ENCODE measurements at regions of chr15 and their contacts with region 1.

Region 1: DNA sequence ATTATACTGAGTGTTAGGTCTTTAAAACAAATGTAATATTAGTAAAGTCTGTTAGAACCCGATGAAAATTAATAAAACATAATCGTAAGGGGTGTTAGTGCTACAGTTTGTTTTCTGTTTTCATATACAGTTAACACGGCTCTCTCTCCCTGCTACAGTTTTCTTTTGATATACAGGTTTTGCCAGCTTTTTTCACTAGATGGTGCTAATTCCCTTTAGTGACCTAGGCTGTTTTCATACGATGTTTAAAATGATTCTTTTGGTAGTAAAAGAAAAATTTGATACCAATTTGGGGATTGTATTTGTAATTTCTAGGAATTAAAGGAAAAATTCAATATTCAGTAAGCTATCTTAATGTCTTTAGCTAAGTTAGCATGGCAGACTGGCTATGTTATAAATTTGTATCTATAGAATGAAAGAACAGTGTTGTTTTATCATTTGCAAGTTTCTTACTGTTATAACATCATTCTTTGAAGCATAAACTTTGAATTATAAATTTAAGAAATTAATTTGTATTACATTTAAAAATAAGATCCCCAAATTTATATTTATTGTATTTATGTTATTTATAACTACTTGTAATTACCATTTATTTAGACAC is 11.5 kb downstream of the APH1B start:
- DNase-seq: no peak
- H3K4me3 ChIP-seq: no peak overlapping the region
- H3K27ac ChIP-seq: no peak overlapping the region
- H3K4me1 ChIP-seq: no peaks in the 10 kb centered on the region
- H3K27me3 ChIP-seq: no peaks in the 10 kb centered on the region
- CTCF ChIP-seq: peak in 2 of 3 donors; percentile 54 to 58
- EP300 ChIP-seq: no peak
- POLR2A ChIP-seq: no peak

Region 2: DNA sequence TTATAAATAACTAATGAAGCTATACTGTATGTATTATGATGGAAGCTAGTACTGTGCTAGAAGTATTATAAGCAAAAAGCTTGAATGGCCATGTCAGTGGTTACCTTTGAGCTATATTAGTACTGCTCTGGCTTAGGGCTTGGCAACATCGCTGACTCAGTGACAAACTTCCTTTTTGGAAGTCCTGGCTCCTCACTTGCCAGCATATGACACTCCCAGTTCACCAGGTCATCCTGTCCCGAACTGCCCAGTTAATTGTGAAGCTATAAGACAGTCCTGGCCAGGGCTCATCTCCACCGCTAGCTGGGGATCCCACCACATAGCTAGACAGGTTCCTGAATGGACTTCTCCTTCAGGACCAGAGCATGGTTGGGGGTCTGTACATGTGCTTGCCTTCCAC is 67.5 kb before region 1 on chr15:
- intact Hi-C with region 1: no loop called
- DNase-seq: peak in 1 of 5 donors; percentile 29
- H3K4me3 ChIP-seq: no peak overlapping the region
- H3K27ac ChIP-seq: no peak overlapping the region
- H3K4me1 ChIP-seq: peaks cover 4% of the 10 kb centered on the region
- H3K27me3 ChIP-seq: no peaks in the 10 kb centered on the region
- CTCF ChIP-seq: no peak
- EP300 ChIP-seq: no peak
- POLR2A ChIP-seq: no peak

Region 3: GRCh38 chr15:63381301-63382204 is 92.7 kb after region 1 on chr15 and contains the start of gene CA12:
- intact Hi-C with region 1: loop called in 1 of 4 experiments (anchors 10 kb)
- DNase-seq: peak in 2 of 5 donors; percentile 30 to 46
- H3K4me3 ChIP-seq: peak within 1 kb of the TSS; percentile 40
- H3K27ac ChIP-seq: no peak within 1 kb of the TSS
- H3K4me1 ChIP-seq: peaks cover 2% of the 10 kb centered on the region
- H3K27me3 ChIP-seq: no peaks in the 10 kb centered on the region
- CTCF ChIP-seq: no peak
- EP300 ChIP-seq: no peak
- POLR2A ChIP-seq: no peak
- total RNA-seq, gene CA12: 0.61 to 10.5 (median 3.5) TPM in 6 of 7 donors, not detected in the other

Region 4: DNA sequence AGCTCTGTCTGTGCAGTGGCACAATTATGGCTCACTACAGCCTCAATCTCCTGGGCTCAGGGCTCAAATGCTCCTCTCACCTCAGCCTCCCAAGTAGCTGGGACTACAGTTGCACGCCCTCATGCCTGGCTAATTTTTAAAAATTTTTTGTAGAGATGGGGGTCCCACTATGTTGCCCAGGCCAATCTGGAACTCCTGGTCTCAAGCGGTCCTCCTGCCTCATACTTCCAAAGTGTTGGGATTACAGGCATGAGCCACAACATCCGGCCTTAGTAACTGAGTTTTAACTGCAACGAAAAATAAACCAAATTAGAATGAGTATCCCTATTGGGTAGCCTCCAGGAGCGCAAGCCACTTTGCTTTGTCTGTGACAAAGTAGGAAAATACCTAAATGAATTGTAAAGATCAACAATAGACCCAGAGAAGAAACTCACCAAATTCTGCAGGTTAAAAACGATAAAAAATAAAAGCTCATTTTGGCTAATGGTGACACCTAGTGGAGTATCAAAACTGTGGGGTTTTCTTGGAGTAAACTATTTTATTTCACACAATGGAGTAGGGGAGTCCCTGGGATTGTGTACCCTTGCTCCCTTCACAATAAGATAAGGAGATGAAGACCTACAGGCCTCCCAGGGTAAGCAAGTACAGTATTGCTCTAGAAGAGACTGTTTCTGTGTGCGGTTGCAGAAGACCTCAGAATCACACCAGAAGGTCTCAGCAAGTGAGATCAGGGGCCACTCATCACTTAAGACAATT is 113.8 kb after region 1 on chr15:
- intact Hi-C with region 1: loop called in 1 of 4 experiments (anchors 5 kb)
- DNase-seq: no peak
- H3K4me3 ChIP-seq: no peak overlapping the region
- H3K27ac ChIP-seq: no peak overlapping the region
- H3K4me1 ChIP-seq: no peaks in the 10 kb centered on the region
- H3K27me3 ChIP-seq: no peaks in the 10 kb centered on the region
- CTCF ChIP-seq: peak; percentile 19 to 50 (median 46)
- EP300 ChIP-seq: no peak
- POLR2A ChIP-seq: no peak

Region 5: DNA sequence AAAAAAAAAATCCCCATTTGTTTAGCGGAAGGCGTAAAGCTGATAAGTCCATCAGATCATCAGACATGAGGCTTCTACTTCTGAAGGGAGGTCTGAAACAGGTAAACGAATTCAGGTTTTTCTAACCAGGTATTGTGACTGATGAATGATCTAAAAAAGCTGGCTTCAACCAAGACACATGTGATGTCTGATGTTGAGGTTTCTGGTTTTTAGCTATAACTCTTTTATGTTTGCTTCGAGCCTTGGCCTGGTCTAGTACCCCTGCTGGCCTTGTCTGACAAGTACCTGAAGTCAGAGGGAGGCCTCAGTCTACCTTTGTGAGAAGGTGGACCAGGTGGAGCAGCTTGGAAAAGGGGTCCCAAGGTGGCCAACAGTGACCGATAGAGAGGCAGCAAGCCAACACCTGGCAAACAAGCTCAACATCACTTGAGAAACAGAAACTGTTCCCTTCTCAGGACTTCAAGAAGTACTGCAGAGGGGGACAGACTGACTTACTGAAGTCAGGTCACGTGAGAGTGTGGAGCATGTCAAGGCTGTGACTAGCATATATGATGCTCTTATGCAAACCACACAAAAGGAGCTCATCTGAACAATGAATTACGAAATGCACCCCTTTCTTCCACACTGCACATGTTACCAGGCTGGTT is 125.7 kb after region 1 on chr15:
- intact Hi-C with region 1: loop called in 2 of 4 experiments (anchors 5 to 10 kb)
- DNase-seq: no peak
- H3K4me3 ChIP-seq: no peak overlapping the region
- H3K27ac ChIP-seq: no peak overlapping the region
- H3K4me1 ChIP-seq: no peaks in the 10 kb centered on the region
- H3K27me3 ChIP-seq: no peaks in the 10 kb centered on the region
- CTCF ChIP-seq: no peak
- EP300 ChIP-seq: no peak
- POLR2A ChIP-seq: no peak

Region 6: GRCh38 chr15:64067564-64068030 is 778.7 kb after region 1 on chr15:
- intact Hi-C with region 1: loop called in 1 of 4 experiments (anchors 10 kb)
- DNase-seq: peak; percentile 44 to 69 (median 66)
- H3K4me3 ChIP-seq: no peak overlapping the region
- H3K27ac ChIP-seq: no peak overlapping the region
- H3K4me1 ChIP-seq: peaks cover 7% of the 10 kb centered on the region
- H3K27me3 ChIP-seq: no peaks in the 10 kb centered on the region
- CTCF ChIP-seq: peak; percentile 67 to 71 (median 70)
- EP300 ChIP-seq: no peak
- POLR2A ChIP-seq: no peak

Measured in ovary (tissue), 10 donors.